ENCODE measurements at regions of chr7 and their contacts with region 1.

Region 1: DNA sequence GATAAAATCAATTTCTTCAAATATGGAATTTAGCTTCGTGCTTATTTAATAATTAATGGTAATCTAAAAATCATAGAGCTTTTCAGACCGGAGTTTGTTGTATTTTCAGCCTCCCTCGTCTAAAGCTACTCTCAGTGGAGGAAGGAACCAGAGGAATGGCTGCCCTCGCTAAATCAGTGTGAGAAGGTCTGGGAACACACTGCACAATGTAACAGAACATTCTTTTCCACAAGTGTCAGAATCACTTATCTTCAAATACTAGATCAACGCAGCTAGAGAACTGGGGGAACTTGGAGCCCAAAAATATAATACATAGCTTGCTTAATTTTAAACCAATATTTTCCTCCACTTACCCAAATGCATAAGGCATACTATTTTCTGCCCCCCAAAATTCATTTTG is 148.5 kb downstream of the MTERF1 start:
- DNase-seq: no peak
- ATAC-seq: peak in 1 of 4 donors; percentile 42
- H3K4me3 ChIP-seq: no peak overlapping the region
- H3K27ac ChIP-seq: no peak overlapping the region
- H3K4me1 ChIP-seq: no peaks in the 10 kb centered on the region
- H3K27me3 ChIP-seq: no peaks in the 10 kb centered on the region
- CTCF ChIP-seq: no peak
- POLR2A ChIP-seq: no peak

Region 2: DNA sequence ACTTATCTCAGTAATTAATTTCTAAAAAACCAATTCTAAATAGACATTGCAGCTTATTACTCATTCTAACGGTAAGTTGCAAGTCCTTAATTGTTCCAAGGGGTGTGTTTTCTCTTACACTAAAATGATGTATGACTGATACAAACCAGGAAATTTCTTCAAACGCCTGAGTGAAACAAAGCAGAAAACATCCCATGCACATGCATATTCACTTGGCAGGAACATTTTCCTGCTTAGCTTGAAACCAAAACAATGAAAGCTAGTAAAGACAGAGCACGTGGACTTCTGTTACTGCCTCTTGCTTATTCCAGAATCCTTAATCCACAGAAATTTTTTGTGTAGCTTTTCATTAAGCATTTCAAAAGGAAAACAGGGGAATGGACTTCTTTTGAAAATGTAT is 39.2 kb before region 1 on chr7:
- intact Hi-C with region 1: loop called in 1 of 10 experiments (anchors 2 kb)
- DNase-seq: no peak
- ATAC-seq: no peak
- H3K4me3 ChIP-seq: no peak overlapping the region
- H3K27ac ChIP-seq: peak overlapping the region in 1 of 12 donors; percentile 52
- H3K4me1 ChIP-seq: peaks cover 0 to 4% (median 0%) of the 10 kb centered on the region in 12 donors
- H3K27me3 ChIP-seq: no peaks in the 10 kb centered on the region
- CTCF ChIP-seq: no peak
- POLR2A ChIP-seq: no peak

Region 3: DNA sequence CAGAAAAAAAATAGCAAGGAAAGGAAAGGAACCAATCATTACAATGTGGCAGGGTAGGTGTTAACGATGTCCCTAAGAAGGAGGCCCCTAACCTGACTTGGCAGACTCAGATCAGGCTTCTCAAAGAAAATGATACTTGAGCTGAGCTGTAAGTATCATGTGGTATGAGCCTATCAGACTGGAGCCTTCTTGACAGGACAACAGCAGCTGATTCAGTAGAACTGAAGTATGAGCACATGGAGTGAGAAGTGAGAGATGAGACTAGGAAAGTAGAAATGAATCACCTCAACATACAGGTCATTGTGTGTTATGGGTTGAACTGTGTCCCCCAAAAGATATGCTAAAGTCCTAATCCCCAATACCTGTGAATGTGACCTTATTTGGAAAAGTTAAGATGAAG is 82.2 kb after region 1 on chr7:
- intact Hi-C with region 1: no loop called
- DNase-seq: no peak
- ATAC-seq: no peak
- H3K4me3 ChIP-seq: no peak overlapping the region
- H3K27ac ChIP-seq: no peak overlapping the region
- H3K4me1 ChIP-seq: peaks cover 0 to 17% (median 0%) of the 10 kb centered on the region in 12 donors
- H3K27me3 ChIP-seq: no peaks in the 10 kb centered on the region
- CTCF ChIP-seq: no peak
- POLR2A ChIP-seq: no peak

Region 4: GRCh38 chr7:91843831-91844230 is 111.9 kb after region 1 on chr7:
- intact Hi-C with region 1: no loop called
- DNase-seq: no peak
- ATAC-seq: no peak
- H3K4me3 ChIP-seq: no peak overlapping the region
- H3K27ac ChIP-seq: no peak overlapping the region
- H3K4me1 ChIP-seq: peaks cover 0 to 11% (median 0%) of the 10 kb centered on the region in 12 donors
- H3K27me3 ChIP-seq: no peaks in the 10 kb centered on the region
- CTCF ChIP-seq: no peak
- POLR2A ChIP-seq: no peak